ENCODE measurements at regions of chr7 and their contacts with region 1.

Region 1: GRCh38 chr7:28116041-28116440 is 64.6 kb downstream of the JAZF1 start:
- DNase-seq: no peak

Region 2: DNA sequence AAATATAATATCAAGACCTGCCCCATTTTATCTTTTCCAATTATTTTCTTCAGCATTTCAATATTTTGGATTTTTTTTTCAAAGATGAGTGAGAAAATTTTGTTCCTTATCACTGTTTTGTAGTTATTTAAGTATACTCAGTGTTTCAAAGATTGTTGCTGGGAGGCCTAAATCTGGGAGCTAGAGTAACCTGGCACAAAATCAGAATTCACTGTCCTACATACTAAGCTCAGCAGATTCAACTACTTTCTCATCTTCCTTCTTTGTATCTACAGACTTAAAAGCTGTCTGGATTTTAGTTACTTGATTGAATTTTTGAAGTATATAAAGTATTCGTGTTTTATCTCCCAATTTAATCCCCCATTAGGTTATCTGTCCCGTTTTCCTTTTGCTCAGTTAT is 290.1 kb before region 1 on chr7:
- intact Hi-C with region 1: no loop called
- DNase-seq: no peak

Region 3: DNA sequence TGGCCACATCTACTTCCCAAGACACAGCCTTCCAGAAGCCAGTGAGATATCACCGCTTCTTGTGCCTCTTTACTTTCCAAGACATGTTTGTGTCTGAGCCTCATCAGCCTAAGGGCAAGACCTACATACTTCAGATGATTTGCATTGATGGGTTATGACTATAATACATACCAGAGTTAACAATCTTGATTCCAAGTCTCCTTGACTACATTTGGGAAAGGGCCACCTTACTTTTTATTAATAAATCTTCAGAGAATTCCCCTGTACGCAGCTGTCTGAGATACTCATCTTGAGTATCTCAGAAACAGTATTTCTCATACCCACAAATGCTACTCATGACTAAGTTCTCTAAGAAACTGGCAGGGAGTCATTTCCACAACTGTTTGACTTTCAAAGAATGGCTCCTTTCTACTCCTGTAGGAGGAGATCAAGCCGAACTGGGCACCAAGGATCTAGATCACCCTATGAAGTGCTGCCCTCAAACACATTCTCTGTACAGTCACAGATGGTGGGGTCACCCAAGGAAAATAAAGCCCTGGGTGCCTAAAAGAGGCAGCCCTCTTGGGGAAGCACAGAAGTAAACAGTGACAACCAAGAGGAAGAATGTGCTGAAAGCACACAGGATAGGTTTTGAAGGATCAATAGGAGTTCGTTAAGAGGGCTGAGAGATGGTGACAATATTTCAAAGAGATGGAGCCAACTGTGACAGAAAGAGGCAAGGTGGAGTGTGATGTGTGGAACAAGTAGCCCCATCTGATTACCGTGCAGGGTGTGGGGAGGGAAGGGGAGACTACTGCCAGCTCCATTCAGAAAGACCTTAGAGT is 74.3 kb before region 1 on chr7:
- intact Hi-C with region 1: no loop called
- DNase-seq: no peak

Region 4: DNA sequence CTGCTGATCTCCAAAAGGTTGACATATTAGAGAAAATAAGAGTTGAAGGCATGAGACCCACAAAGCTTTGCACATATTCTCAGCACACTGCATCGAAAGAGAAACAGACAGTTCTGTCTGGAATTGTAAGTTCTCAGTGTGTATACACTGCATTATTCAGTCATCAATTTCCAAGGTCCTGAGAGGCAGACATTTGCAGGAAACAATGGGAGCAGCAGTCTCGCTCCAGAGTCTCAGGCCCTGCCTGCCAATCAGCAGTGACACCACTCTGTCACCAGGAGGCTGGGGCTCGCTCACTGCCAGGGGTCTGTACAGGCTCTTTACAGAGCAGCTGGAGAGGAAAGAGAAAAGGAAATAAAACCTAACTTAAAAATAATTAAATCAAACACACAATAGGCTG is 28.2 kb after region 1 on chr7:
- intact Hi-C with region 1: no loop called
- DNase-seq: no peak

Region 5: GRCh38 chr7:28165961-28166955 is 50.2 kb after region 1 on chr7:
- intact Hi-C with region 1: loop called (anchors 5 kb)
- DNase-seq: no peak